ENCODE measurements at regions of chr3 and their contacts with region 1.

Region 1: DNA sequence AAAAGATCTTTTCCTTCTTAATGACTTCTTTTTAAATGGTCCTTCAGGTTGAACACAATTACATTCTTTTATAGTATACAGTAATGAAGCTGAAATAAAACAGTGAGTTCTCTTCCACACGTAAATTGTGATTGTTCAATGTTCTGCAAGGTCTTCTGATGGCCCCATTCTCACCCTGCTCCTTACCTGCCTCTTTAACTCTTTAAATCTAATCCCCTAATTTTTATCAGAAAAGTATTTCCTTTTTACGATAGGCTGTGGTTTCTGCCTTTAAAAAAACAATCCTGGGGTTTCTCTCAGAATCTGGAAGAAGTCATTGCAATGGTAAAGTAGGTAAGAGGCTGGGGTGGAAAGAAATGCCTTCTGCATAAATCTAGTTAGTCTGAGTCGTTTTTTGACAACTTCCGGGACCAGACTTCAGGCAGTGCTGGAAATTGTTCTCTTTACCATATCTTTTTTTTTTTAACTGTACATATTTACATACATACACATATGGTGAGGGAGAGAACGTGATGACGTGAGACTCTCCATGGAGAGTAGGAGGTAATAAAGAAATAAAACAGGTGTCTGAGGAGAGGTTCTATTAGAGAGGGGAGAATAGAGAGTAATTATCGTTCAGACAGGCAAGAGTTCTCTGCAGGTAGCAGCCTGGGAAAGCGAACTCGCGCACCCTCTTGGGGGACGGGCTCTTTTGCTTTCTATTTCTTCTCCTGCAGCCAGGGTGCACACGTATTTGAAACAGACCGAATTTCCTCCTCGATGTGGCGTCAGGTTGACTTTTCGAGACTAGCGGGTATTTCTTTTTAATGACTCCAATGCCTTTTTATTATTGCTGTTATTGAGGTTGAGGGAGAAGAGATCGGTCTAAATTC is at the start of gene SIDT1:
- DNase-seq: peak; percentile 76
- H3K4me3 ChIP-seq: peak within 1 kb of the TSS; percentile 74
- H3K27ac ChIP-seq: peak within 1 kb of the TSS; percentile 64
- H3K4me1 ChIP-seq: peaks cover 22% of the 10 kb centered on the region
- CTCF ChIP-seq: no peak
- total RNA-seq, gene SIDT1: 10.3 and 10.4 TPM in 2 replicates

Region 2: GRCh38 chr3:113421082-113421481 is 111.0 kb before region 1 on chr3:
- CTCF ChIA-PET with region 1: no interaction called
- POLR2A ChIA-PET with region 1: no interaction called
- intact Hi-C with region 1: no loop called
- DNase-seq: no peak
- H3K4me3 ChIP-seq: no peak overlapping the region
- H3K27ac ChIP-seq: no peak overlapping the region
- H3K4me1 ChIP-seq: peaks cover 7% of the 10 kb centered on the region
- CTCF ChIP-seq: no peak

Region 3: DNA sequence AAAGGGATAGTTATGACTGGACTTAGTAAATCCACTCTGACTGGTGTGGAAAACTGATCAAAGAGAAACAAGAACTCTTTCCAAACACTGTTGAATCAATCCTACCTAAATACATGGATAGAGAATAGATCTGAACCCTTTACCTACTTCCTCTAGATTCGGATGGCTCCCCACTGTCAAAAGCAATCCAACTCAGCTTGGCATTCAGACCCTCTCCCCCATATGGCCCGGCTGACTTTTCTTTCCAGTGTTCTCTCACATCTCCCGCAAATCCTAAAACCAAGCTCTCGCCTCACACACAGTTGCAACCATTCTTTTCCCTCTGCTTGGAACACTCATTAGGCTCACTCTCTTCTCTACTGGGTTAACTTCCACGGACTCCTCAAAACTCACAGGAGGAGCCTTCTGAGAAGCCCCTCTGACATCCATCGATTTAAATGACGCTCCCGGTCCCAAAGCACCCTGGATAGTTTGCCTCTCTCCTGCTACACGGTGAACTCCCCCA is 17.7 kb before region 1 on chr3:
- CTCF ChIA-PET with region 1: interaction called, 5 read pairs
- POLR2A ChIA-PET with region 1: interaction called, 15 read pairs
- intact Hi-C with region 1: loop called (anchors 1 kb)
- DNase-seq: peak; percentile 12
- H3K4me3 ChIP-seq: peak overlapping the region; percentile 88
- H3K27ac ChIP-seq: peak overlapping the region; percentile 71
- H3K4me1 ChIP-seq: peaks cover 17% of the 10 kb centered on the region
- CTCF ChIP-seq: no peak

Measured in OCI-LY7 (cell line).